Left colon (tissue), 2 donors: ENCODE measurements at regions of chr1 and their contacts with region 1.

Region 1: GRCh38 chr1:113835642-113836307 is 23.5 kb upstream of the RSBN1 start:
- DNase-seq: no peak
- ATAC-seq: peak; percentile 36

Region 2: DNA sequence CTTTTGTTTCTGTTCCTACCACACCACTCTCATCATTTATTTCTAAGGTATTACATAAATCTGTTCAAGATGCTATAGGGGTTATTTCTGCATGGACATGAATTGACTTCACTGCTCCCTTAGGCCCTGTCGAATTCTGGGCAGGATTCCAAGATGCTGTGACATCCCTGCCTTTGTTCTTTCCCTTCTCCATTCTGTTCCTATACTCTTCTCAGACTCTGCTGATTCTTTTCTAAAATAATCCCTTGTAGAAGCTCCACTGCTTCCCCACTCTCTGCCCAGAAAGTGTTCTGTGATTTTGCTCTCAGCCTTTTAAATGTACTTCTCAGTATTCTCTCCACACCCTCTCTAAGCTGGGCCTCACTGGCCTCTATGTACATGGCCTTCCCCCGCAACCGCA is 175.7 kb before region 1 on chr1:
- intact Hi-C with region 1: no loop called
- DNase-seq: no peak
- ATAC-seq: no peak

Region 3: DNA sequence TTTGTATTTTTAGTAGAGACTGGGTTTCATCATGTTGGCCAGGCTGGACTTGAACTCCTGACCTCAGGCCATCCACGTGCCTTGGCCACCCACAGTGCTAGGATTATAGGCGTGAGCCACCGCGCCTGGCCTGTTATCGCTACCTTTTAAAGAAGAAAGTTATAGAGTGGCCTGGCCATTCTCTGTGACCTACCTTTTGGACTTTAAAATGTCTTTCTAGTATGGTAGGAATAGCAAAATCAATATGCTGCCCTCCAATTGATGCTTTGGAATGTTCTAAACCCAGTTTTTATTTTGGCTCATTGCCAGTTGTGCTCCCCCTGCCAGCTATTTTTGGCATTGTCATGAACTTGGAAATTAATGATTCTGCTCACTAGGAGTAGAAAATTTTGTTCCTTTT is 113.2 kb after region 1 on chr1:
- intact Hi-C with region 1: loop called in 1 of 2 experiments (anchors 10 kb)
- DNase-seq: no peak
- ATAC-seq: no peak

Region 4: DNA sequence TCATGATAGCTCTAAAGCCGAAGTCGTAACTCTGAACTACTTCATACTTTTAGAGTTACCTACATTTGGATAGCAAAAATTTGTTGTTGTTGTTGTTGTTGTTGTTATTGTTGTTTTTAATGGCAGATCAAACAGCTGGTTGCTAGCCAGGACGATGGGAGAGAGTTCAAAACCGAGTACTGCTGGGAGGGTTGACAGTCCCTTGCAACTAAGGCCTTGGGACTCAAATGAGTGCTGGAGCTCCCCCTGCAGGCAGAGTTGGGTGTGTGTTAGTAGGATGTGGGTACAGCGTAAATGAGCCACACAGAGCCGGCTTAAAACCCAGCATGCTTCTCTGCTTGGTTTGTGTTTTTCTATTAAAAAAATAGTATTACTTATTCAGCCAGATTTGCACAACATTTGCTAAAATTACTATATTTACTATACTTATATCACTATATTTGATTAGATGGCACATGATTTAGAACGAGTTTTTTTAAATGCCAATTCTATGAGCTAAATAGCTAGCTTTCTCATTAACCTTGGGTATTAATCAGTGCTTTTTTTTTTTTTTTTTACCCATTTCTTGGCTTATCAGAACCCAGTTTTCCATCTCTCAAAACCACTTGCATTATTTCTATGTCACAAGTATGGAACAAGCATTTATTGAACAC is 447.1 kb after region 1 on chr1:
- intact Hi-C with region 1: loop called in 1 of 2 experiments (anchors 10 kb)
- DNase-seq: peak; percentile 78 to 93
- ATAC-seq: peak; percentile 99